Esophagus squamous epithelium (tissue), 5 donors: ENCODE measurements at regions of chr6 and their contacts with region 1.

Region 1: GRCh38 chr6:1348675-1349074 is 36.8 kb downstream of the FOXQ1 start:
- DNase-seq: no peak
- H3K4me3 ChIP-seq: no peak overlapping the region
- H3K27ac ChIP-seq: peak overlapping the region in 1 of 4 donors; percentile 21
- H3K4me1 ChIP-seq: peaks cover 0 to 14% (median 3%) of the 10 kb centered on the region in 3 donors
- H3K27me3 ChIP-seq: peaks cover 0 to 33% (median 0%) of the 10 kb centered on the region in 4 donors
- CTCF ChIP-seq: no peak
- POLR2A ChIP-seq: no peak

Region 2: DNA sequence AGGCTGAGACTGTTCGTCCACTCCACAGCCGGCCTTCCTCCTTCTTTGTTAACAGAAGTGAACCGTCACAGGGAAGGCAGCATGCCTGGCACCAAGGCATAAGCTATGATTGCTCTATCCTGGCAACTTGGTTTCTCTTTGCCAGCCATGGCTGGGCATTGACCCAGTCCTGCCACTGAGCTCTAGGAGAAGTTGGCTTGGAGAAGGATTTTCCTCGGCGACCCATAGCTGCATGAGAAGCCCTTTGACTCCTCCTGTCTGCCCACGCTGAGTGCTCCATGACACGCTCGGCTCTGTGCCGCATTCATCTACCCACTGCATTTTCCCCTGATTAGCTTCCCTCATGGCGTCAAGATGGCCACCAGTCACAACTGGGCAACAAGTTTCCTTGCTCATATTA is 543.9 kb before region 1 on chr6:
- intact Hi-C with region 1: loop called (anchors 10 kb)
- DNase-seq: no peak
- H3K4me3 ChIP-seq: no peak overlapping the region
- H3K27ac ChIP-seq: no peak overlapping the region
- H3K4me1 ChIP-seq: no peaks in the 10 kb centered on the region
- H3K27me3 ChIP-seq: peaks cover 0 to 8% (median 0%) of the 10 kb centered on the region in 4 donors
- CTCF ChIP-seq: no peak
- POLR2A ChIP-seq: no peak